A673 (cell line): ENCODE measurements at regions of chr2 and their contacts with region 1.

Region 1: DNA sequence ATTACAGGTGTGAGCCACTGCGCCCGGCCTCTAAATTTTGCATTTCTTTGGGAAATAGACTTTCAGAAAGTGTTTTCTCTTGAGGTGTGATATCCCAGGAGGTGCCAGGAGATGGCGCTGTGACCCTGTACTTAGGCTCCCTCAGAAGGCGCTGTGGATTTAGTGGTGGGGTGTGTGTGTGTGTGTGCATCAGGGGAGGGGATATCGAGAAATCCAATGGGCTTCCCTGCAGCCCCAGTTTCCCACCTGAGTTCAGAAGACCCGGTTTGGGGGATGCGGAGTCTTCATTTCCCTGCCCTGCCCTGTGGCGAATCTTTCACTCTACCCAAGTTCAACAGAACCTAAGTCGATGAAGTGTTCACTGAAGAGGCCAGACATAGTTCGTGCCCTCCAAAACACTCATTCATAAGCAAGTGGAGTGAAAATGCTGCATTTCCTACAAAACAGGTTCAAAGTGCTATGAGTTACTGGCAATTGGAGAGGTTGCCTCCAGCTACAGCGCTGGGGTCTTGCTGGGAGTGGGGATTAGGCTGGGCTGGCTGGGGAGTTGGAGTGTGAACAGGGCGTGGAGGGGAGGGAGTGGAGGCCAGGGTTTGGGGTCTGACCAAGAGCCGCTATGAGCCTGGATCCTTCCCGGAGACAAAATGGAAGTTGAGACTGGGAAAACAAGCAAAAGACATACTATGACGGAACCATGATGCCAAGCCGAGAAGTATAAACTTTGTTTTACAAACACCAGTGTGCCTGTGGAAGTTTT is 6.5 kb upstream of the WNT6 start:
- DNase-seq: peak; percentile 77
- H3K4me3 ChIP-seq: no peak overlapping the region
- H3K27ac ChIP-seq: no peak overlapping the region
- H3K4me1 ChIP-seq: peaks cover 5% of the 10 kb centered on the region
- H3K27me3 ChIP-seq: peaks cover 2% of the 10 kb centered on the region
- CTCF ChIP-seq: peak; percentile 82

Region 2: GRCh38 chr2:218269899-218270720 is 583.0 kb before region 1 on chr2 and contains the starts of genes AAMP and PNKD:
- CTCF ChIA-PET with region 1: no interaction called
- POLR2A ChIA-PET with region 1: no interaction called
- intact Hi-C with region 1: loop called (anchors 5 kb)
- DNase-seq: peak; percentile 100
- H3K4me3 ChIP-seq: peak within 1 kb of the TSS; percentile 91
- H3K27ac ChIP-seq: peak within 1 kb of the TSS; percentile 74
- H3K4me1 ChIP-seq: peaks cover 20% of the 10 kb centered on the region
- H3K27me3 ChIP-seq: no peaks in the 10 kb centered on the region
- CTCF ChIP-seq: 0 out of 2 replicates have a peak, but pooled peaks have one; percentile 18
- total RNA-seq, gene AAMP: 74.7 and 78.8 TPM in 2 replicates
- total RNA-seq, gene PNKD: 36.7 and 44.9 TPM in 2 replicates

Region 3: DNA sequence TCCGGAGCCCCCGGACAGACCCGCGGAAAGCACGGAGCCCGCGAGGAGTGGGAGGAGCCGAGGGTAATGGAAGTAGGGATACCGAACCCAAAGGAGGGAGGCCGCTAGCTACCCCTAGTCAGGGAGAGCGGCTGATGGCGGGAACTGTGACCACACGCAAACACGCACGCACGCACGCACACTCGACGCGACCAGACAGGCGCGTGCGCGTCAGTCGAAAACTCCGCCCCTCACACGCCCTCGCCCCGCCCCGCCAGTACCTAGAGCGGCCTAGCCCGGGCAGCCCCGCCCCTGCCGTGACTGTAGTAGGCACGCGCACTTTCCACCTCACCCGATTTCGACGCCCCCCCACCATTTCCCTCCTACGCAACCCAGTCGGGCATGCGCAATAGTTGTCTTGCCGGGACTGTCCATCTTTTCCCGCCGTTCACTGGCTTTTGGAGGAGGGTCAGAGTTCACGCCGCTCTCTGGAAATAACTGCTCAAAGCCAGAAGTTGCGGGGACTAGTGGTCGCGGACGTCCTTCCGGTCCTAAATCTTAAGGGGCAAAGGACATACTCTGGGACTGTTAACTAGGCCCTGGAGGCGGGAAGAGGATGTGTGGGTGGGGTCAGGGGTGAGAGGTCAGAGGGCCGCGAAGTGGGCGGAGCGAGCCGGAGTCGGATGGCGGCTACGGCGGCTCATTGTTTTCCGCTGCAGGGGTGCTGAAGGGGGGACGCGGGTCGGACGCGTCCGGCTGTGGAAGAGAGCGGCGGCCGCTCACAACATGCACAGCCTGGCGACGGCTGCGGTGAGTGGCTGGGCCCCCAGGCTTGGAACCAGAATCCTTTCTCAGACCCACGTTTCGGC is 284.7 kb before region 1 on chr2 and contains the starts of genes CNOT9 and USP37:
- CTCF ChIA-PET with region 1: no interaction called
- POLR2A ChIA-PET with region 1: no interaction called
- intact Hi-C with region 1: no loop called
- DNase-seq: peak; percentile 99
- H3K4me3 ChIP-seq: peak within 1 kb of the TSS; percentile 92
- H3K27ac ChIP-seq: peak within 1 kb of the TSS; percentile 94
- H3K4me1 ChIP-seq: peaks cover 19% of the 10 kb centered on the region
- H3K27me3 ChIP-seq: no peaks in the 10 kb centered on the region
- CTCF ChIP-seq: no peak
- total RNA-seq, gene CNOT9: 89.5 and 92.3 TPM in 2 replicates
- total RNA-seq, gene USP37: 31.0 and 33.2 TPM in 2 replicates

Region 4: GRCh38 chr2:218837495-218837894 is 15.6 kb before region 1 on chr2:
- CTCF ChIA-PET with region 1: interaction called, 13 read pairs
- POLR2A ChIA-PET with region 1: no interaction called
- intact Hi-C with region 1: no loop called
- DNase-seq: no peak
- H3K4me3 ChIP-seq: no peak overlapping the region
- H3K27ac ChIP-seq: no peak overlapping the region
- H3K4me1 ChIP-seq: no peaks in the 10 kb centered on the region
- H3K27me3 ChIP-seq: peaks cover 26% of the 10 kb centered on the region
- CTCF ChIP-seq: no peak

Region 5: DNA sequence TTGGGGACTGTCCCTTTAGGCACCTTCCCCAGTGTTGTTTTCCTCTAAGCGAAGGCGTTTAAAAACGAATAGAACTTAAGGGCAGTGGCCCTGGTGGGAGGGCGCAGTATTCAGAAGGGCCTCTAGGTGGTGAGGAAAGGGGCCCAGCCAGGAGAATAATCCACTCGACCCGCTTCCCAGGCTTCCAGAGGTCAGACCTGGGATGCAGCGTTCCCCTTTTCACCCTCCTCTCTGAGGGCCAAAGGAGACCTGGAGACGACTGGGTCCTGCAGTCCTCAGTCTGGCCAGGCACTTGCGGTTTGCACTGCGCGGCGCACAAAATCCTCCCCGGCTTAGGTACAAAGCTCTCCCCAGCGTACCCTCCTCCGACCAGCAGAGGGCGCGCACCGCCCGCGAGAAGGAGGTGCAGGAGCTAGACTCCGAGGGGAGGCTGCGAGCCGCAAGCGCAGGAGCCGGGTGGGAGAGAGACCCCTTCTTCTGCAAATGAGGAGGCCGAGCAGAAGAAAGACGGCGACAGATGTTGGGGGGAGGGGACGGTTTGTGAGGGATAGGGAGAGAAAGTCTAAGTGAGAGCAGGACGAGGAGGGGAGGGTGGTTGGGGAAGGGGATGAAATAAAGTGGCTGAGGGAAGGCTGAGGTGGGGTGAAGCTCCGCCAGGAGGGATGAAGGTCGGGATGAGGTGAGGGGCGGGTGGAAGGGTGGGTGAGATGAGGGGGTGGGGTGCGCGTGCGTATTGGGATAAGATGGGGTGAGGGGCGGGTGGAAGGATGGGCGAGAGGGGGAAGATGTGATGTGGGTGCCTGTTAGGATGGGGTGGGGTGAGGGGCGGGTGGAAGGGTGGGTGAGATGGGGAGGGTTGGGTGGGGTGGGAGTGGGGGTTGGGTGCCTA is 127.0 kb after region 1 on chr2:
- CTCF ChIA-PET with region 1: no interaction called
- POLR2A ChIA-PET with region 1: no interaction called
- intact Hi-C with region 1: loop called (anchors 5 kb)
- DNase-seq: peak; percentile 90
- H3K4me3 ChIP-seq: peak overlapping the region; percentile 38
- H3K27ac ChIP-seq: no peak overlapping the region
- H3K4me1 ChIP-seq: peaks cover 8% of the 10 kb centered on the region
- H3K27me3 ChIP-seq: peaks cover 34% of the 10 kb centered on the region
- CTCF ChIP-seq: peak; percentile 99

Region 6: DNA sequence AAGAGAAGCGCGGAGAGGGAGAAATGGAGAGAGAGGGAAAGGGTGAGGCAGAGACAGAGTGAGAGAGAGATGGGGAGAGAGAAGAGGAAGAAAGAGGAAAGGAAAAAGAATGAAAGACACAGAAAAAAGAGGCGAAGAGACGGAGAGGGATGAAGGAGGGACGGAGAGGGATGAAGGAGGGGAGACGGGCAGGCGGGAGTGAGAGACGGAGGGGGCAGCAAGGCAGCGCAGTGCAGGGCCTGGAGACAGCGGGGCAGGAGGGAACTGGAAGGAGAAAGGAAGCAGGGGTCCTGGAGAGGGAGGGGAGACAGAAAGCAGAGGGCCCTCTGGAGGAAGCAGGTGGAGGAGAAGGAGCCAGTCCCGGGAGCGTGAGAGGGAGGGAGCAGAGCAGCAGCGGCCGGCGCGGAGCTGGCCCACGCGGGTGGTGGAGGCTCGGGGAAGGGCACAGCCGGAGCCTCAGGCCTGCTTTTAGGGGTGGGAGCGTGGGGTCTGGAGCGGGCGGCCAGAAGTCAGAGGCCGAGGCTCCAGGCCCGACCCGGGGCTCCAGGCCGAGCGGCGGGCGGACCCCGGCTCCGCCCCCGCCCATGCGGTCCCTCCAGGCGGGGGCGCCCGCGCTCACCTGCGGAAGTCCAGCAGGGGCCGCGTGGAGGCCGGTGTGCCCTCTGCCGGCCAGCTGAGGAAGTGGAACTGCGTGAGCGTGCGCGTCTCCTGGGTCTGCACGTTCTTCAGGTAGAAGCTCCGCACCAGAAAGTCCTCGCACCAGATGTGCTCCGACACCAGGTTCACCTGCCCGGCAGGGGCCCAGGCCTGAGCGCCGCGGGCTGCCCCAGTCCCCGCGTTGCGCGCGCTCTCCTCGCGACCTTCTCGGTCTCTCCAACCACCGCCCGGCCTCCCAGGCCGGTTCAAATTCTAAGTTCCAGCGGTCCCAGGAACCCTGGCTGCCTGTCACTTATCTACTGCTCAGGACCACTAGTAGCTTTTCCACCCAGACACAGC is 441.6 kb after region 1 on chr2:
- CTCF ChIA-PET with region 1: no interaction called
- POLR2A ChIA-PET with region 1: no interaction called
- intact Hi-C with region 1: loop called (anchors 10 kb)
- DNase-seq: peak; percentile 84
- H3K4me3 ChIP-seq: peak overlapping the region; percentile 59
- H3K27ac ChIP-seq: peak overlapping the region; percentile 56
- H3K4me1 ChIP-seq: peaks cover 4% of the 10 kb centered on the region
- H3K27me3 ChIP-seq: peaks cover 9% of the 10 kb centered on the region
- CTCF ChIP-seq: peak; percentile 92